Activated B cell treated with CpG ODN at 0.5 μM for 24 hours (primary cell): ENCODE measurements at regions of chr17 and their contacts with region 1.

Region 1: DNA sequence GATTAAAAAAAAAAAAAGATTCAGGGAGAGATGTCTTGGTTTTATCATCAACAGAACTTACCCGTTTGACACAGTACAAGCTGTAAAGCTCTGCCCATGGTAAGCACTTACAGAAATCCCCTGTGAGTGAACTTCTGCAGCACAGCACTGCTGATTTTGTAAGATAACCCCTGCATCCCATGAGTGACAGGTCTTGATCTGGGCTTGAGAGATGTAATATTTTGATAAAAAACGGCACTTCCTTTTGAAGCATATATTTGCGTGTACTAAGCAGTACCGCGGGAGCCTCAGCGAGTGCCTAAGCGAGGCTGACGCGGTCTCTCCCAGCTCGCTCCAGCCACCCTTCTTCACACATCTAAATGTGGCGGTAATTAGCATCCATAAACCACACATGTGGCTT is 50.5 kb downstream of the IKZF3 start:
- DNase-seq: no peak
- ATAC-seq: peak; percentile 52
- H3K4me3 Mint-ChIP-seq: peak overlapping the region; percentile 32
- H3K27ac Mint-ChIP-seq: peak overlapping the region; percentile 77
- H3K4me1 Mint-ChIP-seq: peaks cover 79% of the 10 kb centered on the region
- H3K27me3 Mint-ChIP-seq: no peaks in the 10 kb centered on the region
- CTCF ChIP-seq: no peak

Region 2: DNA sequence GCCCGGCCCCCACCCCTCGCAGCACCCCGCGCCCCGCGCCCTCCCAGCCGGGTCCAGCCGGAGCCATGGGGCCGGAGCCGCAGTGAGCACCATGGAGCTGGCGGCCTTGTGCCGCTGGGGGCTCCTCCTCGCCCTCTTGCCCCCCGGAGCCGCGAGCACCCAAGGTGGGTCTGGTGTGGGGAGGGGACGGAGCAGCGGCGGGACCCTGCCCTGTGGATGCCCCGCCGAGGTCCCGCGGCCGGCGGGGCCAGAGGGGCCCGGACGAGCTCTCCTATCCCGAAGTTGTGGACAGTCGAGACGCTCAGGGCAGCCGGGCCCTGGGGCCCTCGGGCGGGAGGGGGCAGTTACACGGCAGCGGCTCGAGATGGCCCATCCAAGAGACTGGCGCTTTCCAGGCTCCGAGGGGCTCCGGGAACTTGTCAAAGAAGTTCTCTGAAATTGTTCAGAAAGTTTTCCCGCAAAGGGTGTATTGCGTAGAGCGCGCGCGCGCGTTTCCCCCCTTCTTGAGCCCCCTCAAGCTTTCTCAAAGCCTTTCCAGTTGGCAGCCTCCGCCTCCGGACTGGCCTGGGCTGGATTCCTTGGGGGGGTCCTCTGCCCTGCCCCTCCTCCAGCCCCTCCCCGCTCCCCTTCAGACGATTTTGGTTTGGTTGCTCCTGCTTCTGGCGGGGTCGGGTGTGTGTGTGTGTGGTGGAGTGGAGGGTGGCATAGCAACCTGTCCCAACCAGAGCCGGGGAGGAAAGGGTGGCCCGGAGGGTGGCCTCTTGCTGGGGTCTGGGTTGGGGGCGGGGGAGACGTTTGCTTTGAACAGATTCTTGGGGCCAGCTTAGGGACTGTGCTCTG is 113.3 kb before region 1 on chr17:
- CTCF ChIA-PET with region 1: no interaction called
- POLR2A ChIA-PET with region 1: no interaction called
- intact Hi-C with region 1: no loop called
- DNase-seq: no peak
- ATAC-seq: no peak
- H3K4me3 Mint-ChIP-seq: no peak overlapping the region
- H3K27ac Mint-ChIP-seq: no peak overlapping the region
- H3K4me1 Mint-ChIP-seq: peaks cover 14% of the 10 kb centered on the region
- H3K27me3 Mint-ChIP-seq: peaks cover 30% of the 10 kb centered on the region
- CTCF ChIP-seq: no peak

Region 3: GRCh38 chr17:39800540-39800939 is 13.1 kb before region 1 on chr17:
- CTCF ChIA-PET with region 1: no interaction called
- POLR2A ChIA-PET with region 1: interaction called, 33 read pairs
- intact Hi-C with region 1: loop called (anchors 1 kb)
- DNase-seq: no peak
- ATAC-seq: peak; percentile 79
- H3K4me3 Mint-ChIP-seq: peak overlapping the region; percentile 29
- H3K27ac Mint-ChIP-seq: peak overlapping the region; percentile 84
- H3K4me1 Mint-ChIP-seq: peaks cover 73% of the 10 kb centered on the region
- H3K27me3 Mint-ChIP-seq: no peaks in the 10 kb centered on the region
- CTCF ChIP-seq: no peak